ENCODE measurements at regions of chr12 and their contacts with region 1.

Region 1: DNA sequence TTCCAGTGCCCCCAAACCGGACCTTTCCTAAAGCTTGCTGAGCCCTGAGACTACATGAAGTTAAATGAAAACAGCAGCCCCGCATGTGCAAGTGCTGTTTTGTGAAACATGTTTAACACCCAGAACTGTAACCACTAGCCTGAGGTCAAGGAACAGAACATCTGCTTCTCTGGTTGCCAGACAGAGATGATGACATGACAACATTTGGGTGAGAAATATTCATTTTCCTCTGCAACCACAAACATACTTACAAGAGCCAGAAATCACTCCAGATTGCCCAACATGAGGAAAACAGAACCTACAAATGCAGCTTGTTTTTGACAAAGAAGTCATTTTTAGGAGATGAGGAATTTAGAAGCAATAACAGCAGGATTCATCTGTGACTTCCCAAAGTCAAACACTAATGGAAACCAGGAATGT is 110.4 kb downstream of the BCAT1 start:
- DNase-seq: peak; percentile 45
- H3K4me3 Mint-ChIP-seq: no peak overlapping the region
- H3K27ac Mint-ChIP-seq: peak overlapping the region; percentile 83
- H3K4me1 Mint-ChIP-seq: peaks cover 32% of the 10 kb centered on the region
- H3K27me3 Mint-ChIP-seq: peaks cover 11% of the 10 kb centered on the region

Region 2: GRCh38 chr12:23949348-23950209 is 889.0 kb before region 1 on chr12 and contains the start of gene SOX5:
- CTCF ChIA-PET with region 1: no interaction called
- intact Hi-C with region 1: loop called (anchors 5 kb)
- DNase-seq: no peak
- H3K4me3 Mint-ChIP-seq: no peak within 1 kb of the TSS
- H3K27ac Mint-ChIP-seq: no peak within 1 kb of the TSS
- H3K4me1 Mint-ChIP-seq: no peaks in the 10 kb centered on the region
- H3K27me3 Mint-ChIP-seq: no peaks in the 10 kb centered on the region
- total RNA-seq, gene SOX5: 0.41 TPM in 1 of 2 experiments, not detected in the other

Region 3: DNA sequence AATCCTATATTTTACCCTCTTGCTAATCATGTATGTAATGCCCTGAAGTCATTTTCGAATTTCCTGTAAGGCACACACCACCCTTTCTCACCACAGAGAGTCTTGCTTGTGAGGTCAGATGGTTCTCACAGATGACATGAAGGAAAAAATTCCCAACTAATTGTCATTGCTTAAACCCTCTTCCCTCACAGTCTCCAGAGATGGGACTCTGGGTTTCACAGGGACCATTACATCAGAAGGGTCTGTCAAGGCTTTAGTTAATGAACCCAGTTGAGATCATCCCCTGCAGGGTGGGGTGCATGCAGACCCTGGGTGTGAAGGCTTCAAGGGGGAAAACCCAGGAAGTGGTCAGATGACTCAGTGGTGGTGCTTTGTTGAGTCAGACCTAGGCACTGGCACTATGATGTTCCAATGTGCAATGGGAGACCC is 119.2 kb before region 1 on chr12:
- CTCF ChIA-PET with region 1: interaction called, 4 read pairs
- intact Hi-C with region 1: loop called (anchors 1 kb)
- DNase-seq: peak; percentile 69
- H3K4me3 Mint-ChIP-seq: no peak overlapping the region
- H3K27ac Mint-ChIP-seq: peak overlapping the region; percentile 87
- H3K4me1 Mint-ChIP-seq: peaks cover 30% of the 10 kb centered on the region
- H3K27me3 Mint-ChIP-seq: peaks cover 5% of the 10 kb centered on the region

Region 4: DNA sequence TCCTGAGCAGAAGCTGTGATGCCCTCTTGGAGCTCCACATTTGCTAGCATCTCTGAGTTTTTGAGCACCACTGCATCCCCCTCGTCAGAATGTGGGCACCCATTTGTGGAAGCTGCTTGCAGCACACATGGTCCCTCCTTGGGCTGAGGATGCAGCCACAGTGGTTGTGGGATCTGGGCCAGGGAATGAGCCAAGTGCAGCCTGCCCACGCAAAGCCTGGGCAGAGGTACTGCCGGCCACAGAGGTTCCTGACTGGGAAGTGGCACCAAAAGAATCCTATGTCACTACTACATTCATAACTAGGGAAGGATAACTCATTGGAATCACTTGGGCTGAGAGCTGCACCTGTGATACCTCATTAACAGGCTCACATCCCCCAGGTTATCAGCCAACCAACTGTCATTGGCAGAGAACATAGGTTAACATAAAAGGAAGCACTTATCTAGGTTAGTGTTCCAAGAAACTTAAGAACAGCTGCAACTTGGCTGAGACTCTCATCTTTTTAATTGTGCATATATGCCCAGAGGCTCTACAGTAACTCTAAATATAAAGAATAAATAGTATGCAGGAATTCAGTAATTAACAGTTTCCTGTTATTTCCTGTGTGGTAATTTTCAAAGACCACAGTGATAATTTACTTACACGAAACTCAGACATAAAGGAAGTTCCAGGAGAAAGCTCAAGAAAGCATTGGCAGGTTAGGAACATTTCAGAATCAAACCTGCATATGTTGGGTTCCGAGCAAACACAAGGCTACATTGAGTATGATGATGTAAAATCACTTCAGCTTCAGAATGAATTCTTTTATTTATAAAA is 34.9 kb before region 1 on chr12:
- CTCF ChIA-PET with region 1: no interaction called
- intact Hi-C with region 1: no loop called
- DNase-seq: no peak
- H3K4me3 Mint-ChIP-seq: no peak overlapping the region
- H3K27ac Mint-ChIP-seq: no peak overlapping the region
- H3K4me1 Mint-ChIP-seq: peaks cover 5% of the 10 kb centered on the region
- H3K27me3 Mint-ChIP-seq: no peaks in the 10 kb centered on the region

Region 5: GRCh38 chr12:24814379-24815113 is 24.0 kb before region 1 on chr12:
- CTCF ChIA-PET with region 1: interaction called, 5 read pairs
- intact Hi-C with region 1: loop called (anchors 1 kb)
- DNase-seq: no peak
- H3K4me3 Mint-ChIP-seq: peak overlapping the region; percentile 52
- H3K27ac Mint-ChIP-seq: peak overlapping the region; percentile 32
- H3K4me1 Mint-ChIP-seq: peaks cover 22% of the 10 kb centered on the region
- H3K27me3 Mint-ChIP-seq: no peaks in the 10 kb centered on the region

Region 6: DNA sequence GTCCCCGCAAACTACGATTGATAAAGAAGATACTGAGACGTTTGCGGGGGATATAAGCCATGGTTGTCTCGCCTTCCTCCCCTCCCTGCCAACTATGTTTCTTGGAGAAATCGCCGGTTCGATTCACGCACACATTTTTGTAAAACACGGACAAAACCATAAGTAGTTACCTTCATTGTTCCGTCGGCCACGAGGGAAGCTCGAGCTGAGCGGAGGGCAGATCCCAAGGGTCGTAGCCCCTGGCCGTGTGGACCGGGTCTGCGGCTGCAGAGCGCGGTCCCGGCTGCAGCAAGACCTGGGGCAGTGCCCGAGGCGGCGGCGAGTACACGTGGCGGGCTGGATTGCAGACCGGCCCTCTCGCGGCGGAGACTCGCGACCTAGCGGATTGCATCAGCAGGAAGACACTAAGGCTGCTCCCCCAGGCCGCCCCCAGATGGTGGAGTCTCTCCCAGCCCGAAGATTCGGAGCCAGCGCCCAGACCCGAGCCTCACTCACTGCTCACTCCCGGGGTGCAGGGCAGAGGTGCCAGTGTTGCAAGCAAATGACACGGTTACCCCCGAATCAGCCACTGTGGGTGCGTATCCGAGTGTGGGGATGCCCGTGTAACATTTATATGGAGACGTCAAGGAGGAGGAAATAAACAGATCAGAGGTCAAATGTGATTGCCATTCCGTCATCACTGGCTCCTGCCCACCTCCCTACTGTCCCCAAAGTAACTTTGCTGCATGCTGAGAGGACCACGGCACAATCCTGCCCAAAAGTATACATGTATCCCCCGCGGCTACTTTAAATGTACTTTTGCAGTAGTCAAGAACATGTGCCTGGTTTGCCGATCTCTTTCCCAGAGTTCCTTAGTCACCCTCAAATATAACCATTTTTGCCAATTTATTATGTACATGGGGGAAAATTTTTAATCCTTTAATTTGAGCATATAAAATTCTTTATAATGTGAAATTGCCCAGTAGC is 110.5 kb after region 1 on chr12 and contains the start of gene BCAT1:
- CTCF ChIA-PET with region 1: interaction called, 3 read pairs
- intact Hi-C with region 1: loop called (anchors 1 kb)
- DNase-seq: peak; percentile 35
- H3K4me3 Mint-ChIP-seq: peak within 1 kb of the TSS; percentile 81
- H3K27ac Mint-ChIP-seq: peak within 1 kb of the TSS; percentile 81
- H3K4me1 Mint-ChIP-seq: peaks cover 59% of the 10 kb centered on the region
- H3K27me3 Mint-ChIP-seq: peaks cover 62% of the 10 kb centered on the region
- total RNA-seq, gene BCAT1: 16.4 to 16.7 TPM

Region 7: GRCh38 chr12:25320123-25321006 is 481.8 kb after region 1 on chr12:
- CTCF ChIA-PET with region 1: no interaction called
- intact Hi-C with region 1: loop called (anchors 1 kb)
- DNase-seq: peak; percentile 51
- H3K4me3 Mint-ChIP-seq: peak overlapping the region; percentile 33
- H3K27ac Mint-ChIP-seq: peak overlapping the region; percentile 87
- H3K4me1 Mint-ChIP-seq: peaks cover 54% of the 10 kb centered on the region
- H3K27me3 Mint-ChIP-seq: no peaks in the 10 kb centered on the region

Measured in activated naive CD4-positive, alpha-beta T cell treated with anti-CD3 and anti-CD28 coated beads for 36 hours (primary cell).